Calu3 (cell line): ENCODE measurements at regions of chr17 and their contacts with region 1.

Region 1: DNA sequence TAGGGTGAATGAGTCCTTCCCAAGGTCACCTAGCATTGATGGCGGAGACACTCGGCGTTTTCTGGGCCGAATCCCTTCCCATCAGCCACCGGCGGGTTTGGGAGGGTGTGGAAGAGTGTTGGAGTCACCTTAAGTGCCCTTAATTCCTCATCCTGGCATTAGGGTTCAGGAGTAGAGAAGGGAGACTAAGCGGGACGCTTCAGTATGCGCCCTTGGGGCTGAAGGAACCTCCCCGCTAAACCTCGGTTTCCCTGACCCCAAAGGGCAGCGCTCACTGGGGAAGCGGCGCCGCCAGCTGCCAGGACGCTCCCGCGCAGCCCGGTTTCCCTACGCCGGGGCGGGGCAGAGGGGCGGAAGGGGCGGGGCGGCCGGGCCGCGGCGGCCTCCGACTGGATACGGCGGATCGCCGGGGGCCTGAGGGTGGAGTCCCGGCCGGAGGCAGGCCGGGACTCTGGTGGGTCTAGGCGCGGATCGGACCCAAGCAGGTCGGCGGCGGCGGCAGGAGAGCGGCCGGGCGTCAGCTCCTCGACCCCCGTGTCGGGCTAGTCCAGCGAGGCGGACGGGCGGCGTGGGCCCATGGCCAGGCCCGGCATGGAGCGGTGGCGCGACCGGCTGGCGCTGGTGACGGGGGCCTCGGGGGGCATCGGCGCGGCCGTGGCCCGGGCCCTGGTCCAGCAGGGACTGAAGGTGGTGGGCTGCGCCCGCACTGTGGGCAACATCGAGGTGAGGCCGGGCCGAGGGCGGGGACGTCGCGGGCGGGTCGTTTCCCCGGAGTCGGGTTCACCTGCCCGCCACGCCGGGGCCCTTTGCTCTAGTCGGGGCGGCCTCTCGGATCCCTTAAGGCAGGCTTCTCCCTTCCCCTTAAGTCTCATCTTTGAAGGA is at the start of gene DHRS11:
- DNase-seq: peak; percentile 99
- H3K4me3 Mint-ChIP-seq: peak within 1 kb of the TSS; percentile 89
- H3K27ac Mint-ChIP-seq: peak within 1 kb of the TSS; percentile 48
- H3K4me1 Mint-ChIP-seq: peaks cover 40% of the 10 kb centered on the region
- H3K27me3 Mint-ChIP-seq: no peaks in the 10 kb centered on the region
- CTCF ChIP-seq: peak; percentile 1
- total RNA-seq, gene DHRS11: 53.3 and 63.3 TPM in 2 replicates

Region 2: DNA sequence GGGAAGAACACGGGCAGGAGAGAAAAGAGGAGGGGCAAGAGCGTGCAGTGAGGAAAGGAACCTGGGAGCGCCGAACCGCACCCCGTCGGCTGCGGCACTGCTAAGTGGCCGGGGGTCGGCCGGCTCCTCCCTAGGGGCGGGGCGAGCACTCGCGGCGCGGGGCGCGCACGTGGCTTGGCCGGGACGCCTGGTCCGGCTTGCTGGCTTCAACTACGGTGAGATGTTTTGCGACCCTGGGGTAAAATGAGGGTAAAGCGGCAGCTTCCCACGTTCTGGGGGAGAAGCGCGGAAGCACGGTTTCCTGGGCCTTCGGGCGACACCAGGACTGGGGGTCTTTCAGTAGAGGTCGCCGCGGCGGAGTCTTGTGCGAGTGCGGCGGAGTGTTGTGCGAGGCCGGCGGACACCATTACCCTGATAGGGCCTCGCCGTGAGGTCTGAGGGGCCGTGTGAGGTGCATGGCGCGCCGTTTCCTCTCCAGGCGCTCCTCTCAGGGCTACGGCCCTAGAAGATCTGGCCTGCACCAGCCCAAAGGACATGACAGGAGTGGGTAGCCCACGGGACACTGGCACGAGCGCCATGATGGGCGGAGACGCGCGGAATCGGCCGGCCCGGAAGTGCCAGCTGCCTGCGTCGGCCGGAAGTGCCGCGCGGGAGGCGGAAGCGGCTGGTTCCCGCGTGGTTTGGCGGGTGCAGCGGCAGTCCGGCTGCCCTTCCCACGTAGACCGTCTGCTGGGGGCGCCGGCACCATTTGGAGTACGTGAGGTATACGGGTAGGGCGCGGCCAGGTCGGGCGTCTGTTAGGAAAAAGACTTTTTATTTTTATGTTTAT is 56.6 kb before region 1 on chr17 and contains the starts of genes MYO19 and PIGW:
- CTCF ChIA-PET with region 1: interaction called, 11 read pairs
- intact Hi-C with region 1: no loop called
- DNase-seq: peak; percentile 100
- H3K4me3 Mint-ChIP-seq: peak within 1 kb of the TSS; percentile 99
- H3K27ac Mint-ChIP-seq: peak within 1 kb of the TSS; percentile 93
- H3K4me1 Mint-ChIP-seq: peaks cover 23% of the 10 kb centered on the region
- H3K27me3 Mint-ChIP-seq: no peaks in the 10 kb centered on the region
- CTCF ChIP-seq: peak; percentile 62
- total RNA-seq, gene MYO19: 155 and 156 TPM in 2 replicates
- total RNA-seq, gene PIGW: 71.1 and 78.9 TPM in 2 replicates

Region 3: DNA sequence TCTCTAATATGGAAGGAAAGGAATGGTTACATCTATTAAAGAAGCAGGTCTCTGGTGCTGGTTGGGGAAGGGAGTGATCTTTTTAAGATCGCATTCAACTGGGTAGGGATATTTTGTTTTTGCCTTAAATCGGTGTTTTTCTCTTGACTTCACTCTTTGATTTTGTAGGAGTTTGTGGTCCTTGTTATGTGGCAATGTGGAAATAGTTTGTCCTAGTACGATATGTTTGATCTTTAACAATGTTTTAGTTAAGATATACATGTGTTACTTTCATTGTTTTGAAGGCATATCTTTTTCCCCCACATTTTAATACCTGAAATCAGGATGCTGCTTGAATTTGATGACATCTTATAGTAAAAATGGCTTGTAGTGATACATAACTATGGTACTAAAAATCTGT is 38.2 kb before region 1 on chr17:
- CTCF ChIA-PET with region 1: interaction called, 3 read pairs
- intact Hi-C with region 1: loop called (anchors 2 kb)
- DNase-seq: no peak
- H3K4me3 Mint-ChIP-seq: no peak overlapping the region
- H3K27ac Mint-ChIP-seq: peak overlapping the region; percentile 9
- H3K4me1 Mint-ChIP-seq: peaks cover 30% of the 10 kb centered on the region
- H3K27me3 Mint-ChIP-seq: no peaks in the 10 kb centered on the region
- CTCF ChIP-seq: no peak

Region 4: GRCh38 chr17:36641877-36642845 is 50.5 kb after region 1 on chr17:
- CTCF ChIA-PET with region 1: no interaction called
- intact Hi-C with region 1: no loop called
- DNase-seq: no peak
- H3K4me3 Mint-ChIP-seq: peak overlapping the region; percentile 42
- H3K27ac Mint-ChIP-seq: no peak overlapping the region
- H3K4me1 Mint-ChIP-seq: no peaks in the 10 kb centered on the region
- H3K27me3 Mint-ChIP-seq: peaks cover 100% of the 10 kb centered on the region
- CTCF ChIP-seq: no peak

Region 5: GRCh38 chr17:36707904-36708303 is 116.2 kb after region 1 on chr17:
- CTCF ChIA-PET with region 1: no interaction called
- intact Hi-C with region 1: no loop called
- DNase-seq: no peak
- H3K4me3 Mint-ChIP-seq: no peak overlapping the region
- H3K27ac Mint-ChIP-seq: no peak overlapping the region
- H3K4me1 Mint-ChIP-seq: no peaks in the 10 kb centered on the region
- H3K27me3 Mint-ChIP-seq: peaks cover 93% of the 10 kb centered on the region
- CTCF ChIP-seq: no peak

Region 6: GRCh38 chr17:38469875-38470274 is 1878.2 kb after region 1 on chr17:
- CTCF ChIA-PET with region 1: interaction called, 10 read pairs
- intact Hi-C with region 1: no loop called
- DNase-seq: no peak
- H3K4me3 Mint-ChIP-seq: no peak overlapping the region
- H3K27ac Mint-ChIP-seq: no peak overlapping the region
- H3K4me1 Mint-ChIP-seq: peaks cover 36% of the 10 kb centered on the region
- H3K27me3 Mint-ChIP-seq: peaks cover 14% of the 10 kb centered on the region
- CTCF ChIP-seq: no peak